ENCODE measurements at regions of chr2 and their contacts with region 1.

Region 1: DNA sequence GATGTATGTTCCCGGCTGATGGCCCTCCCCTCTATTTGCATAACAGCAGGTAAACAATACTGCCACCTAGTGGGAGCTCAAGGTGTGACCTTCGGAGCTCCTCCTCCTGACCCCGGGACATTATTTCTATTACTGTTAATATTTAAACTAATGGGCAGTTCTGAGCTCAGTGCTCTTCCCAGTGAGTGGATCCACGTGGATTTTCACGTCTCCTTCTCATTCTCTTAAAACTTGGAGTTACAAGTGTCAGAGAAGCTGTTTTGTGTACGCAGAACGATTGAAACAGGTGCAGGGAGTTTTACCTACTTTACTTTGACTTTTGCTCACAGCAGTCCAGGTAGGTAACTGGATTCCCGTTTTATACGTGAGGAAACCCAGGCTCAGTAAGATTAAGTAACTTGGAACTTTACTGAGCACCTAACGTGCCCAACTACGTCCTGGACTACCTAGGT is 127.3 kb downstream of the PRKCE start:
- DNase-seq: peak in 1 of 2 donors; percentile 72
- ATAC-seq: peak; percentile 72
- H3K4me3 ChIP-seq: no peak overlapping the region
- H3K27ac ChIP-seq: no peak overlapping the region
- H3K4me1 ChIP-seq: no peaks in the 10 kb centered on the region
- H3K27me3 ChIP-seq: no peaks in the 10 kb centered on the region

Region 2: DNA sequence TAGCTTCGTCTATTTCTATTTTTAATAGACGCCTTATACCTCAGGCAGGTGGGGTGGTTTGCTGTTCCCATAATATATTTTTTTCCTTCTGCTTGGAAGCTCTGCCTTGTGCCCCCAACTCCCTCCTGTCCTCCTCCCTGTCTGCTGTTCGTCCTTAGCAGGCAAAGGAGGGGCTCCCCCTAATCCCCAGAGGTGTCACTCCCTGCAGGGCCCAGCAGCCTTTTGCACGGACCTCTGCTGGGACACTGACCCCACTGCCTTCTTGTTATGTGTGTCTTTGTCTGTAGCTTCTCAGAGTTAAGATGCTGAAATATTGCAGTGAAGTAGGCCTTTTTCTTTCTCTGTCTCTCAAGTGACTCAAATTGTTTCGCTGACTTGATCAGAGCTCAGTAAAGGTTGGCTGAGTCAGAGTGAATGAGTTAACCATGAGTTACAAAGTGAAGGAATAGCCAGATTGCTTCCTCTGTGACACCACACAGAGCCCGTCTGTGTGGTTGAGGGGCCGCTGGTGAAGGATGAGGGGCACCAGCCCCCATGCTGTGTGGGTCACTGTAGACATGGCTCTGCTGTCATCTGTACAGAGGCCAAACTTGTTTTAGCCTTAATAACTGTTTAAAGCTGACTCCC is 79.6 kb before region 1 on chr2:
- intact Hi-C with region 1: no loop called
- DNase-seq: no peak
- ATAC-seq: no peak
- H3K4me3 ChIP-seq: no peak overlapping the region
- H3K27ac ChIP-seq: no peak overlapping the region
- H3K4me1 ChIP-seq: no peaks in the 10 kb centered on the region
- H3K27me3 ChIP-seq: no peaks in the 10 kb centered on the region

Region 3: DNA sequence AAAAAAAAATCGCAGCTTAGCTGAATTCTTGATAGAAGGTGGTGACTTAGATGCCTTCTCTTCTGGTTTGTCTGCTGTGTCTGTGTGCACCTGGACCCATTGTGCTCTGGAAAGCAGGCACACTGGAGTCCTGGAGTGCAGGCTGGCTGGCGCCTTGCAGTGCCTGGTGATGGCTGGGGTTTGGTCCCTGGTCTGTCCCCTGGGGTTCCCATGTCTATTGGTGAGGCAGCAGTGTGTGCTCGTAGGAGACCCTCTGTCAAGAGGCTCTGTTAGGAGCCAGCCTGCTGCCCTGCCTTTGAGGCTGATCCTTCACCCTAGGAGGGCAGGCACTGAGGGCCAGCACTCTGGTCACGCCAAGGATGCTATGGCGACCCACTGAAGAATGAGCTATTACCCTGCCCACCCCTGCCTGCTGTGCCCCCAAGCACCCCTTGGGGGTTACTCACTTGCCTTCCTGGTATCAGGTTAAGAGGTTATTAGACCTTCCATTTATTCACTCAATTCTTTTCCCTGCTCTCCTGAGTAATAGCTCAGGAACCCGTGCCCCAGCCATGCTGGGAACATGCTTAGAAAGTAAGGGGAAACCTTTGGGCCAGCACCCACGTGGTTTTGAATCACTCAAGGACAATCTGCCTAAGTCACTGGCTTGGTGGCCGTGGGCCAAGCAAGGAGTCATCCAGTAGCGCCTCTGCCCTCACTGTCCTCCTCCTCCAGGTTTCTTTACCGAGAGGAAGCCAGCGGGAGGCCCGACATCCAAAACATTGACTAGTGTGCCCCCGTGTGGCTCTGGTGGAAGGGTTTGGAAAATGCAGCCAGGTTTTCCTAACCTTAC is 157.3 kb after region 1 on chr2:
- intact Hi-C with region 1: loop called (anchors 2 kb)
- DNase-seq: peak; percentile 96 to 98
- ATAC-seq: peak; percentile 91
- H3K4me3 ChIP-seq: no peak overlapping the region
- H3K27ac ChIP-seq: no peak overlapping the region
- H3K4me1 ChIP-seq: peaks cover 0 to 2% of the 10 kb centered on the region in 2 donors
- H3K27me3 ChIP-seq: no peaks in the 10 kb centered on the region

Measured in aorta (tissue), 5 donors.